ENCODE measurements at regions of chr12 and their contacts with region 1.

Region 1: GRCh38 chr12:67222302-67222701 is 46.9 kb upstream of the CAND1 start:
- DNase-seq: peak; percentile 63
- ATAC-seq: peak; percentile 51; the same call in 1 of the 2 replicates
- H3K4me3 ChIP-seq: no peak overlapping the region
- H3K27ac ChIP-seq: no peak overlapping the region
- H3K4me1 ChIP-seq: no peaks in the 10 kb centered on the region
- H3K27me3 ChIP-seq: peaks cover 16% of the 10 kb centered on the region
- CTCF ChIP-seq: peak; percentile 63

Region 2: DNA sequence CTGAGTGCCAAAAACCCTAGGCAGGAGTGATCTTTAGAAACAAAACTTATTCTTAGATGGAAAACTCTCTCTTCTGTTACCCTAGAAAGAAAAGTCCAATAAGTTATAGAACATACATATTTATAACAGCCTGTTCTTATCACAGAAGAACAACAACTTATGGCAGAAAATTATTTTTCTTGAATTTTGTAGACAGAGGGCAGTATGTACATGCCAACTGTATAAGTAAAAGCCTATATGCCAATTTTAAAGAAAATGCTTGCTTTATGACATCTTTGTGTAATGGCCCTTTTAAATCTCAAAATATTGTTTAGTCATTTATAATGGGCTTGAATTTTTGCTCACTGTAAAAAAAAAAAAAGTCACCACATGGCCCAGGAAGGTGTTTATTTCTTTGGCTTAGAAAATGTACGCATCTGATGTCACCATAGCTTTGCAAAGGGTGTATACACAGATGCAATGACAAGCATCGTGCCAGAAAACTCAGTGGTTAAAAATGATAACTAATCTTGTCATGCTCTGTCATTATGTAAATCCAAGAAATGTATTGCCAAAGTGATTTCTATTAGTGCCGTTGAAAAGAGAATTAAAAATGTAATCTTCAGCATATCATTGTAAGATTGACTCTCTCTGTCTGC is 505.1 kb before region 1 on chr12:
- CTCF ChIA-PET with region 1: no interaction called
- POLR2A ChIA-PET with region 1: no interaction called
- intact Hi-C with region 1: loop called (anchors 10 kb)
- DNase-seq: peak; percentile 38
- ATAC-seq: no peak
- H3K4me3 ChIP-seq: no peak overlapping the region
- H3K27ac ChIP-seq: no peak overlapping the region
- H3K4me1 ChIP-seq: no peaks in the 10 kb centered on the region
- H3K27me3 ChIP-seq: no peaks in the 10 kb centered on the region
- CTCF ChIP-seq: peak; percentile 61

Region 3: GRCh38 chr12:66903782-66904396 is 318.4 kb before region 1 on chr12:
- CTCF ChIA-PET with region 1: no interaction called
- POLR2A ChIA-PET with region 1: no interaction called
- intact Hi-C with region 1: loop called (anchors 1 kb)
- DNase-seq: peak; percentile 42
- ATAC-seq: peak; percentile 74
- H3K4me3 ChIP-seq: no peak overlapping the region
- H3K27ac ChIP-seq: no peak overlapping the region
- H3K4me1 ChIP-seq: no peaks in the 10 kb centered on the region
- H3K27me3 ChIP-seq: no peaks in the 10 kb centered on the region
- CTCF ChIP-seq: peak; percentile 48

Region 4: GRCh38 chr12:67025543-67026114 is 196.7 kb before region 1 on chr12:
- CTCF ChIA-PET with region 1: interaction called, 6 read pairs
- POLR2A ChIA-PET with region 1: no interaction called
- intact Hi-C with region 1: loop called (anchors 1 kb)
- DNase-seq: peak; percentile 77
- ATAC-seq: peak; percentile 46; the same call in 1 of the 2 replicates
- H3K4me3 ChIP-seq: no peak overlapping the region
- H3K27ac ChIP-seq: no peak overlapping the region
- H3K4me1 ChIP-seq: no peaks in the 10 kb centered on the region
- H3K27me3 ChIP-seq: no peaks in the 10 kb centered on the region
- CTCF ChIP-seq: peak; percentile 73

Region 5: DNA sequence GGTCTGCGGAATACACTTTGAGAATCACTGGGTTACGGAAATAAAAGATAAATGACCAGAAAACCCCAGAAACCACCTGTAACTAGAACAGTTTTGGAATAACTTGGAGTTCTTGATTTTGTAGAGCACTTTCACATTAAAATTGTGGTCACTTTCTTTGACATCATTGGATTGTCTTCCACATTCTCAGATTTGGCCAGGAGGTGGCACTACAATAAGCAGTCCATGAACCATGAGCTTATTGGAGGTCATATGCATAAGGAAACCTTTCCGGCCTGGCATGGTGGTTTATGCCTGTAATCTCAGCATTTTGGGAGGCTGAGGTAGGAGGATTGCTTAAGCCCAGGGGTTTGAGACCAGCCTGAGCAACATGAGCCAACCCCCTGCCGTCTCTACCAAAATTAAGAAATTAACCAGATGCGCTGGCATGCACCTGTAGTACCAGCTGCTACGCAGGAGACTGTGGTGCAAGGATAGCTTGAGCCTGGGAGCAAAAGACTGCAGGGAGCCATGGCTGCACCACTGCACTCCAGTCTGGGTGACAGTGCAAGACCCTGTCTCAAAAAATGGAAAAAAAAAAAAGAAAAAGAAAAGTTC is 60.9 kb before region 1 on chr12:
- CTCF ChIA-PET with region 1: interaction called, 5 read pairs
- POLR2A ChIA-PET with region 1: no interaction called
- intact Hi-C with region 1: loop called (anchors 2 kb)
- DNase-seq: peak; percentile 68
- ATAC-seq: 0 out of 2 replicates have a peak, but pooled peaks have one; percentile 29
- H3K4me3 ChIP-seq: no peak overlapping the region
- H3K27ac ChIP-seq: no peak overlapping the region
- H3K4me1 ChIP-seq: no peaks in the 10 kb centered on the region
- H3K27me3 ChIP-seq: peaks cover 63% of the 10 kb centered on the region
- CTCF ChIP-seq: peak; percentile 74

Measured in PC-3 (cell line).